Activated naive CD4-positive, alpha-beta T cell treated with anti-CD3 and anti-CD28 coated beads for 36 hours (primary cell): ENCODE measurements at regions of chr3 and their contacts with region 1.

Region 1: DNA sequence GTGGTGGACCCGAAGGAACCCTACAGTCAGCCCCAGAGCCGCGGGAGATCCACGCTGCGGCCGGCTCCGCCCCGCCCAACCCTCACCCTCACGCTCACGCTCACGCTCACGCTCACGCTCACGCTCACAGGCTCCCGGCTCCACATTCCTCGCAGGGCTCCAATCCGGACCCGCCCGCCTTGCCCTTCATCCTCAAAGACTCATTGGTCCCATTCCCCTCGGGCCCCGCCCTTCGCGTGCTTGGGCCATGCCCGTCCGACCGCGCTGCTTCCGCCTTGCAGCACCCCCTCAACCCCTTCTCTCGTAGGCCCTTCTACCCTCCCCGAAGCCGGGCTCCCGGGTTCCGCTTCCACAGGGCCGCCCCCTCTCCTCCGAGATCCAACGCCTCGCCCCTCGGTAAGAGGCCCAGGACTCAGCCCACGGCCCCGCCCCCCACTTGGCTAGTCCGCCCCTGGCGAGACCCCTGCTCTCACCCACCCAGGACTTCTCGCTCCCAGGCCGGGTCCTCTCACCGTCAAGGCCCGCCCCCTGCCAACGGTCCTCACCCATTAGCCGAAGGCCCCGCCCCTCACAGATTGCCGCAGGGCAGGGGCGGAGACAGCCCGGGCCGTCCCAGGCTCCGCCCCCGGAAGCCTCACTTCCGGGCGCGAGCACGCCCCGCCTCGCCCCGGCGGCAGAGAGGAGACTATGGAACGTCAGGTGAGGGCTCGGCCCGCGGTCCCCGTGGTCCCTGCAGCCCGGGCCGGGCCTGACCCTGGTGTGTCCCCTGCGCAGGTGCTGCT is at the start of gene APEH:
- DNase-seq: peak; percentile 99
- H3K4me3 Mint-ChIP-seq: peak within 1 kb of the TSS; percentile 94
- H3K27ac Mint-ChIP-seq: peak within 1 kb of the TSS; percentile 96
- H3K4me1 Mint-ChIP-seq: peaks cover 36% of the 10 kb centered on the region
- H3K27me3 Mint-ChIP-seq: no peaks in the 10 kb centered on the region
- total RNA-seq, gene APEH: 120 to 122 TPM

Region 2: DNA sequence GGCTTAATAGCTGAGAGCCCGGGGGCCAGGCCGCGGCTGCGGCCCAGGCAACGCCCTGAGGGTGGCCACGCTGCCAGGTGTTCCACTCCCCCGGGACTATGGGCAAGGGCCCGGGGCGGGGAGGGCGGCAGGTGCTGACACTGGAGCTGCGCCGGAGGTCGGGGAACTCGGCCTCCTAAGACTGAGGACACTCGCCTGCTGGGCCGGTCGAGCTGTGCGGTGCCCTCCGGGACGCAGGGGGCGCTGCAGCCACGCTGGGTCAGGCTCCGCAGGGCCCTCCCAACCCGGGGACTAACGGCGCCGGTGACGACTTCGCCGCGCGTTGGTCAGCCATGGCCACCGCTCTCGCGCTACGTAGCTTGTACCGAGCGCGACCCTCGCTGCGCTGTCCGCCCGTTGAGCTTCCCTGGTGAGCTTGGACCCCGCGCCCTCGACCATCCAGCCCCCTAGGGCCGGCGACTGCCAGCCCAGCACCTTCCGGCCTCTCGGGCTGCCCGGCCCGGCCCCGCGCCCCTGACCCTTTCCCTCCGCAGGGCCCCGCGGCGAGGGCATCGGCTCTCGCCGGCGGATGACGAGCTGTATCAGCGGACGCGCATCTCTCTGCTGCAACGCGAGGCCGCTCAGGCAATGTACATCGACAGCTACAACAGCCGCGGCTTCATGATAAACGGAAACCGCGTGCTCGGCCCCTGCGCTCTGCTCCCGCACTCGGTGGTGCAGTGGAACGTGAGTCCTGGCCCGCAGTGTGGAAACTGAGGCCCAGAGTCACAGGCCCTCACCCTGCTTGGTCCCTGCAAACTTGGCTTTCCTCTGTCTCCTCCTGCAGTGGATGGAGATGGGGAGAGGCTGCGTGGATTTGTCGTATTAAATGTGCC is 651.9 kb before region 1 on chr3 and contains the start of gene NDUFAF3:
- CTCF ChIA-PET with region 1: no interaction called
- intact Hi-C with region 1: loop called (anchors 5 kb)
- DNase-seq: peak; percentile 95
- H3K4me3 Mint-ChIP-seq: peak within 1 kb of the TSS; percentile 96
- H3K27ac Mint-ChIP-seq: peak within 1 kb of the TSS; percentile 97
- H3K4me1 Mint-ChIP-seq: peaks cover 60% of the 10 kb centered on the region
- H3K27me3 Mint-ChIP-seq: no peaks in the 10 kb centered on the region
- total RNA-seq, gene NDUFAF3: 113 to 115 TPM

Region 3: GRCh38 chr3:49339945-49340800 is 333.7 kb before region 1 on chr3 and contains the start of gene USP4:
- CTCF ChIA-PET with region 1: no interaction called
- intact Hi-C with region 1: loop called (anchors 5 kb)
- DNase-seq: peak; percentile 96
- H3K4me3 Mint-ChIP-seq: peak within 1 kb of the TSS; percentile 91
- H3K27ac Mint-ChIP-seq: peak within 1 kb of the TSS; percentile 100
- H3K4me1 Mint-ChIP-seq: peaks cover 44% of the 10 kb centered on the region
- H3K27me3 Mint-ChIP-seq: no peaks in the 10 kb centered on the region
- total RNA-seq, gene USP4: 68.0 to 69.7 TPM

Region 4: DNA sequence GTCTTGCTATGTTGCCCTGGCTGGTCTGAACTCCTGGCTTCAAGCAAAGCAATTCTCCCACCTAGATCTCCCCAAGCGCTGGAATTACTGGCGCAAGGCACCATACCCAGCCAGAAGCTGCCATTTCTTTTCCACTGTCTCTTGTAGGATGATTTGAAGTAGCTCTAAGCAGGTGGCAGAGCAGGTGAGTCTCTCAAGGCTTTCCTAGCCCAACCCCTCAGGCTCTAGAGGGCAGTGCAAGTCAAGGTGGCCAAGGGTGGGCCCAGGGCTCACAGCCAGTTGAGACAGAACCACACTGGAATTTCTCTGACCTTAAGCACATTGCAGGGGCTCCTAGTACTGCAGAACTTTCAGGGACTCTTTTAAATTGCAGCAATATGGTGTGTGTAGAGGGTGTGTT is 219.4 kb before region 1 on chr3:
- CTCF ChIA-PET with region 1: no interaction called
- intact Hi-C with region 1: loop called (anchors 5 kb)
- DNase-seq: peak; percentile 30
- H3K4me3 Mint-ChIP-seq: no peak overlapping the region
- H3K27ac Mint-ChIP-seq: no peak overlapping the region
- H3K4me1 Mint-ChIP-seq: no peaks in the 10 kb centered on the region
- H3K27me3 Mint-ChIP-seq: no peaks in the 10 kb centered on the region

Region 5: GRCh38 chr3:49539659-49540560 is 134.0 kb before region 1 on chr3:
- CTCF ChIA-PET with region 1: interaction called, 171 read pairs
- intact Hi-C with region 1: loop called (anchors 1 kb)
- DNase-seq: peak; percentile 93
- H3K4me3 Mint-ChIP-seq: peak overlapping the region; percentile 69
- H3K27ac Mint-ChIP-seq: no peak overlapping the region
- H3K4me1 Mint-ChIP-seq: peaks cover 2% of the 10 kb centered on the region
- H3K27me3 Mint-ChIP-seq: no peaks in the 10 kb centered on the region

Region 6: DNA sequence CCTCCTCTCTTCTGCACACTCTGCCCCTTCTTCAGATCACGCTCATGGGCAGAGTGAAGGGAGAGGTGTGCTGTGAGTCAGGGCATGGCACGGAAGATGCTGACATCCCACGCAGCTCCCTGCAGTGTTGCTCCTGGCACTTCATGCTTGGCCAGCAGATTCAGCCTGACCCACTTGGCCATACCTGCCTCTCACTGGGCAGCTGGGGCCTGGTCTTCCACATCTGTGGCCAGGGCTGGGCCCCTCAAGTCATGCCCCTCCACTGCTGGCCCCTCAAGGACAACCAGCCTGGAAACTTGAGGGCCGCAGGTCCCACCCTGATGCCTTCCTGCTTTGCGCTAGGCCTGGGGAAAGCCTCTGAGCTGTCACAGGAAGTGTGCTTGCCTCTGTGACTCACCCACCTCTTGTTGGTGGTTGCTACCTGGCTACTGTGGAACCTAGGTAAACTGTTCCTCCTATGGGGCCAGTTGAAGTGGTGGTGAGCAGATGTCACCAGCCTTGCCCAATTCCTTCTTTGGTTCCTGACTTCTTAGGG is 71.0 kb before region 1 on chr3:
- CTCF ChIA-PET with region 1: no interaction called
- intact Hi-C with region 1: loop called (anchors 2 kb)
- DNase-seq: peak; percentile 80
- H3K4me3 Mint-ChIP-seq: no peak overlapping the region
- H3K27ac Mint-ChIP-seq: peak overlapping the region; percentile 35
- H3K4me1 Mint-ChIP-seq: peaks cover 19% of the 10 kb centered on the region
- H3K27me3 Mint-ChIP-seq: no peaks in the 10 kb centered on the region

Region 7: DNA sequence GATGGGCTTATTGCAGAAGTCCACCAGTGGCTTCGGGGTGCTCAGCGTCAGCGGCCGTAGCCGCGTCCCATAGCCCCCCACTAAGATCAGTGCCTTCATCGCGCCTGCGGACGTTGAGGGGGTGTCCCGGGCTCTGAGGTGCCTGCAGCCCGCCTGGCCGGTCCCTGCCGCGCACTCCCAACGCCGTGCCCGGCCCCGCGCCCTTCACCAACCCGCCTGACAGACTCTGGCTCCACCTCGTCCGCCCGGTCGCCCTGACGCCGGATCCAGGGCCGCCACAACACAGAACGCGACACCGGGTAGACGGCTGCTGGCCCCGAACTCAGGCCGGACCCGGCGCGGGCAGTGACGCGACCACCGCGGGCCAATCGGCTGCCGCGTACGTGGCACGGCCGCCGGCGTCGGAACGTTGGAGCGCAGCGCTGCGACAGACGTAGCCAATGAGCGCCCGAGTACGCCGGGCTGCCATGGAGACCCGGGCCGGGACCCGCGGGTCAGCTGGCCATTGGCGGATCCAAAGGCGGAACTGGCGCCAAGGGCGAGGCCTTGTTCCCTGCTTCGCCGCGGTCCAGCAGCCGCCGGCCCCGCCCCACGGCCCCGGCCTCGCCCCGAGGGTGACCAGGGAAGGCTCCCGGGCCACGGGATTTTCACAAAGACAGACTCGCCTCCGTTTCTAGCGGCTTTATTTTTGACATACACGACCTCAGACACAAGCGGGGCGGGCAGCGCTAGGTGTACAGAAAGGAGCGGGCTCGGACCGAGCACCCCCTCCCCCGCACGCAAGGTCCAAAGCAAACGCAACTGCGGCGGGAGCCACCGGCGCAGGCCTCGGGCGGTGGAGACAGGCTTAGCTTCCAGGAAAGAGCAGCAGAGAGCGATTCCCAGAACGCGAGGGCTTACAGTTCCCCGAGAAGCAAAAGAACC is 50.0 kb after region 1 on chr3 and contains the start of gene GMPPB:
- CTCF ChIA-PET with region 1: no interaction called
- intact Hi-C with region 1: loop called (anchors 2 kb)
- DNase-seq: peak; percentile 96
- H3K4me3 Mint-ChIP-seq: peak within 1 kb of the TSS; percentile 96
- H3K27ac Mint-ChIP-seq: peak within 1 kb of the TSS; percentile 95
- H3K4me1 Mint-ChIP-seq: peaks cover 33% of the 10 kb centered on the region
- H3K27me3 Mint-ChIP-seq: no peaks in the 10 kb centered on the region
- total RNA-seq, gene GMPPB: 25.6 to 27.4 TPM